ENCODE measurements at regions of chr20 and their contacts with region 1.

Region 1: GRCh38 chr20:43749734-43750294 is 23.0 kb upstream of the GTSF1L start:
- DNase-seq: peak; percentile 88
- ATAC-seq: peak; percentile 93

Region 2: DNA sequence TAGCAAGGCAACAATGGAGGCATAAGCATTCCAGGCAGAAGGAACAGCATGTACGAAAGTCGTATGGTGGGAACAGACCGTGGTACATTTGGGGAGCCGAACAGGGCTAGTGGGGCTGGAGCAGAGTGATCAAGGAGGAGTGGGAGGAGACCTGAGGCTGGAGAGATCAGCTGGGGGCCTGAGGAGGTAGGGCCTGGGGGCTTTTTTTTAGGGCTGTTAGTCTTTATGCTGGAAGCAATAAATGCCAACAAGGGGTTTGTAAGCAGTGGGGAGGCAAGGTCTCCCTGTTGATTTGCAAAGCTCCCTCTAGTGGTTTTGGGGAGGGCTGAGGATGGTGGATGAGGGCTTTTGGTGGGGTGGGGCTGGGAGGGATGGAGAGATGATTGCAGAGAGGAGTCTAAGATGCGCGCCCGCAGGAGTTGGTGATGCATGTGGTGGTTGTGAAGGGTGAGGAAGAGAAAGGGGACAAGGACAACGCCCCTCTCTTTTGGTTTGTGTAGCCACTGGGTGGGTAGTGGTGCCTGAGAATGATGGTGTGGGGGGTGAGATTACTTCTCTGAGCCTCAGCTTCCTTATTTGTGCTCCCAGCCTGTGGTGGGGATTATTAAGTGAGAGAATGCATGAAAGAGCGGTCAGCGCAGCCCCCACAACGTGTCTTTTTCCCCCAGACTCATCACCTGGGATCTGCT is 90.7 kb after region 1 on chr20:
- intact Hi-C with region 1: loop called (anchors 10 kb)
- DNase-seq: no peak
- ATAC-seq: no peak

Region 3: DNA sequence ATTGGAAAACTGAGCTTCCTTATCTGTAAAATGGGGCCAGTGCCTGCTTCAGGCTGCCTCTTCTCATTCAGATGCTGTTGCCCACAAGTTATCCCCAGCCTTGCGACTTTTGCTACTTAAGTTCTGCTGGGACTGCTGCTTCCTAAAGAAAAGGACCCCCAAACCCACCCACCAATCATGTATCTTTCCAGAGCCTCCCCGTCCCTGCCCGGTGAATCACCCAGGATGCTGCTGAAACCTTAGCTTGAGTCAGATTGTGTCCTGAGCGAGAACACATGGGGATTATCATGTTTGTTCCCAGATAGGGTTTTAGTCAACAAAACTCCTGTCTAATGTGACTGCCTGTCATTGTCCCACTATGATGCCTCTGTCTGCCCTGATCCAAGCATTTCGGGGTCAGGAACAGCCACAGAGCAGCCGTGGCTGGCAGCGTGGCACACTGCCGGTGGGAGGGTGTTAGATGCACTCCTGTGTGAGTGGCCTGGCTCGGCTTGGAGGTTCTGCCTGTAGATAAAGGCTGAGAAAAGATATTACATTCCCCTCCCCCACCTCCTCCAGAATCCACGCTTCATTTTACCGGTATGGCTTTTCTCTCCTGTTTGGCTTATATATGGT is 244.8 kb after region 1 on chr20:
- intact Hi-C with region 1: no loop called
- DNase-seq: no peak
- ATAC-seq: peak; percentile 45

Region 4: DNA sequence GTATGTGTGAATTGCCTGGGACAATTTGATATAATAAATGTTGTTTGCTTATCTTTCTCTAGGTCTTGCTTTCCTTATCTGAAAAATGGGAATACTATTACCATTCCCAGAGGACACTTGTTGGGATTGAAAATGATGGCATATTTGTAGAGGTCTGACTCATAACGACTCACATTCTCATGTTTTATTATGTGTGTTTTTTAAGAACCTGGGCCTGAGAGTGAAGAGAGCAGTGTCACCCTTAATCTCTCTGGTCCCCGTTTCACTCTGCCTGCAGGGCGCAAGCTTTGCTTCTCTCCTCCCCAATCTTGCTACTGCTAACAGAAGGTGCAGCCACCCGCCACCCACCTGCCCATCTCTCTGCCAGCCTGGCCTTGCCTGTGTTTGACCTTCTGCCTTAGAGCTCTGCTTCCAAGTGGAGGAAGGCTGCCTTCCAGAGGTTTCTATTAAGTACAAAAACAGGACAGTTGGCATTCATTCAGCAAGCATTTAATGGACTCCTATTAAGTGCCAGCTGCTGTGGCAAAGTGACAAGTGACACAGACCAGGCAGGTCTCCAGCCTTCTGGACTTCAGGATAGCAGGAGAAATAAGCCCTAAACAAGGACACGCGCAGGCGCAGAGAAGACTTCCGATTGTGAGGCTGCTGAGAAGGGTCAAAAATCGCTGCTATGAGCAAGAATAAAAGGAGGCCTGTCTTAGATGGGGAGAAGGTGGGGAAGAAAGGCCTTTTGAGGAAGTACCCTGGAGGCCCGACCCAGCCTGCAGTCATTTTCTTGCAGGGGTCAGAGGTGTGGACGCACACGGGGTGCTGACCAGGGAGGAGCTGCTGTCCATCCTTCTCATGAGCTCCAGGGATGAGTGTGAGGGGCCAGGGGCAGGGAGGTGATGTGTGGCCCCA is 324.7 kb after region 1 on chr20:
- intact Hi-C with region 1: loop called (anchors 5 kb)
- DNase-seq: peak; percentile 85
- ATAC-seq: peak; percentile 93